ENCODE measurements at regions of chrX and their contacts with region 1.

Region 1: GRCh38 chrX:153971450-153972367 is at the start of gene HCFC1:
- DNase-seq: peak; percentile 97
- total RNA-seq, gene HCFC1: 39.5 TPM

Region 2: GRCh38 chrX:153934473-153935325 is 37.0 kb before region 1 on chrX and contains the start of gene NAA10:
- intact Hi-C with region 1: loop called (anchors 2 kb)
- DNase-seq: peak; percentile 89
- total RNA-seq, gene NAA10: 87.2 TPM

Region 3: GRCh38 chrX:154378782-154379591 is 407.3 kb after region 1 on chrX and contains the start of gene EMD:
- intact Hi-C with region 1: loop called (anchors 10 kb)
- DNase-seq: peak; percentile 97
- total RNA-seq, gene EMD: 66.2 TPM